Activated CD8-positive, alpha-beta T cell treated with anti-CD3 and anti-CD28 coated beads, Interleukin-2, amount 10 ng/mL, durations not matched to agents 7 days and 5 days (primary cell): ENCODE measurements at regions of chr11 and their contacts with region 1.

Region 1: DNA sequence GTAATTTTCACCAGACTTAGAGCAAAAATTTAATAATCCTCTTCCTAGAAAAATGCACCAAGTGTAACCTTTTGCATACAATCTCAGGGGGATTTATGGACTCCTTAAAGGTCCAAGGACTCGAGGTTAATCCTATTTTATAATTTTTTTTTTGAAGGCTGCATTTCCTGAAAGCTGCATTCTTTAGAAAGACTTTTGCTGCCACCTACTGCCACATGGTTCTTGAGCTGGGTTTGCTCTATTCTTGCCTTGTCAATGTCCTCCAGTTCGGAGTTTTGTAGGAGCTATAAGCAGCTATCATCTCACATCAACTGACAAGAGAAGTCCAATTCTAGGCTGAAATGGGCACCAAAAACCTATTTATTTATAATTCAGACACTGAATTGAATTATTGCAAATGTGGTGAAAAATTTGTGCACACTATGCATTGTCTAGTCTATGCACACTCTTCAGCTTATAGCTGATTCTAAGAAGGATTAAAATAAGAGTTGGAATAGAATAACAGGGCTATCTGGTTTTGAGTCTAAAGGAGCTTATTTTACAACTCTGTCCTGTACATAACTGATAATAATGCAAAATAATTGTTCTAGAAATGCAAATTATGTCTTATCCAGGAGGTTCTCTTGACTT is 31.3 kb downstream of the TRAF6 start:
- DNase-seq: peak; percentile 51
- ATAC-seq: peak; percentile 47
- H3K4me3 Mint-ChIP-seq: no peak overlapping the region
- H3K27ac Mint-ChIP-seq: no peak overlapping the region
- H3K4me1 Mint-ChIP-seq: peaks cover 6% of the 10 kb centered on the region
- H3K27me3 Mint-ChIP-seq: peaks cover 7% of the 10 kb centered on the region

Region 2: DNA sequence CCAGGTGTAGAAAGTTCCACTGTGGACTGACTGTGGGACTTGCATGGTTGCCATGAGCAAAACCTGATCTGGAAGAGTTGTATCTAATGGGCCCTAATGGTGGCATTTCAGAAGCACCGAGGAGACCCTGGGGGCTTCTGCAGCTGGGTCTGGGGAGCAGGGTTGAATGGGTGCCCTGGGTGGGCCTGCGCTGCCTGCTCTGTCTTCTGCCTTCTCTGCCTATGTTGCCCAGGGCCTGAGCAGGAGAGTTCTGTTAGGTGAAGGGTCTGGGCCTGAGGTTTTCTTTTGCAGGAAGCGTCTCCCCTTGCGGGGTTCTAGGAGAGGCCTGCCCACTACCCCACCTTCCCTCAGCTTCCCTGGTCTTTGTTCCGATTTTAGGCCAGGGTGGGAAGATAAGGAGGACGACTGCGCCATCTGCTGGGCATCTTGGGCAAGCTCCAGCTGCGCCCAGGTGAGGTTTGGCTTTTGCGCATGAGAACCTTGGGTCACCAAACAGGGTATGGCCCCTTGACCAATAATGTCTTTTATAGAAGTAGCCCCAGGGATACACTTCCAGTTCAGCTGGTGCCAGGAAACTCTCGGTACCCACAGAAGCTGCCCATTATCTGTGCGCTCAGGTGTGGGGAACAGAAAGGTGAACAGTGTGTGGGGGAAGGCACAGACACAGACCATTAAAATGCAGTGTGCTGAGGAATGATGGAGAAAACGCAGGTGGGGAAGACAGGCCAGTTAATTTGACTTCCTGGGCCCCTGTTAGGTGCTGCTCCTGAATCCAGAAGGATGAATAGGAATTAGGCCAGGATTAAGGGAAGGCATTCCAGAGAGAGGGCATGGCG is 212.8 kb before region 1 on chr11:
- CTCF ChIA-PET with region 1: interaction called, 11 read pairs
- POLR2A ChIA-PET with region 1: no interaction called
- DNase-seq: peak; percentile 63
- ATAC-seq: peak; percentile 74
- H3K4me3 Mint-ChIP-seq: no peak overlapping the region
- H3K27ac Mint-ChIP-seq: no peak overlapping the region
- H3K4me1 Mint-ChIP-seq: no peaks in the 10 kb centered on the region
- H3K27me3 Mint-ChIP-seq: no peaks in the 10 kb centered on the region

Region 3: DNA sequence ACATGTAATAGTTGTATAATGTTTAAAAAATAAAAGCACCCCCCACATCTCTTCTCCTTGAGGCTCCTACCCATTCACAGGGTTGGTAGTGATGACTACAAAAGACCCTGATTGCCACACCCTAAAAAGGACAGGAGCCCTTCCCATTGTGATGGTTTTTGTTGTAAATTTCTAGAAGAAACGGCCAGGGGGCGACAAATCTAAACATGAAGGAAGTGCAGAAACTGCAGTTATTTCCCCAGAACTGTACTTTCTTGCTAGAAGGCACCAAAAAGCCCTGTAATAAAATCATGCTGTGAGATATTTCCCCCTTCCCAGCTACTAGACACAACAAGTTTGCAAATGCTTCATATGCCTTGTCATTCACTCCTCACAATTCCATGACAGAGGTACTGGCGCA is 171.9 kb before region 1 on chr11:
- CTCF ChIA-PET with region 1: interaction called, 12 read pairs
- POLR2A ChIA-PET with region 1: no interaction called
- DNase-seq: peak; percentile 35
- ATAC-seq: no peak
- H3K4me3 Mint-ChIP-seq: no peak overlapping the region
- H3K27ac Mint-ChIP-seq: no peak overlapping the region
- H3K4me1 Mint-ChIP-seq: peaks cover 5% of the 10 kb centered on the region
- H3K27me3 Mint-ChIP-seq: peaks cover 22% of the 10 kb centered on the region

Region 4: GRCh38 chr11:36376888-36377758 is 101.7 kb before region 1 on chr11:
- CTCF ChIA-PET with region 1: interaction called, 13 read pairs
- POLR2A ChIA-PET with region 1: no interaction called
- DNase-seq: peak; percentile 61
- ATAC-seq: peak; percentile 72
- H3K4me3 Mint-ChIP-seq: peak overlapping the region; percentile 85
- H3K27ac Mint-ChIP-seq: peak overlapping the region; percentile 55
- H3K4me1 Mint-ChIP-seq: peaks cover 29% of the 10 kb centered on the region
- H3K27me3 Mint-ChIP-seq: peaks cover 66% of the 10 kb centered on the region

Region 5: DNA sequence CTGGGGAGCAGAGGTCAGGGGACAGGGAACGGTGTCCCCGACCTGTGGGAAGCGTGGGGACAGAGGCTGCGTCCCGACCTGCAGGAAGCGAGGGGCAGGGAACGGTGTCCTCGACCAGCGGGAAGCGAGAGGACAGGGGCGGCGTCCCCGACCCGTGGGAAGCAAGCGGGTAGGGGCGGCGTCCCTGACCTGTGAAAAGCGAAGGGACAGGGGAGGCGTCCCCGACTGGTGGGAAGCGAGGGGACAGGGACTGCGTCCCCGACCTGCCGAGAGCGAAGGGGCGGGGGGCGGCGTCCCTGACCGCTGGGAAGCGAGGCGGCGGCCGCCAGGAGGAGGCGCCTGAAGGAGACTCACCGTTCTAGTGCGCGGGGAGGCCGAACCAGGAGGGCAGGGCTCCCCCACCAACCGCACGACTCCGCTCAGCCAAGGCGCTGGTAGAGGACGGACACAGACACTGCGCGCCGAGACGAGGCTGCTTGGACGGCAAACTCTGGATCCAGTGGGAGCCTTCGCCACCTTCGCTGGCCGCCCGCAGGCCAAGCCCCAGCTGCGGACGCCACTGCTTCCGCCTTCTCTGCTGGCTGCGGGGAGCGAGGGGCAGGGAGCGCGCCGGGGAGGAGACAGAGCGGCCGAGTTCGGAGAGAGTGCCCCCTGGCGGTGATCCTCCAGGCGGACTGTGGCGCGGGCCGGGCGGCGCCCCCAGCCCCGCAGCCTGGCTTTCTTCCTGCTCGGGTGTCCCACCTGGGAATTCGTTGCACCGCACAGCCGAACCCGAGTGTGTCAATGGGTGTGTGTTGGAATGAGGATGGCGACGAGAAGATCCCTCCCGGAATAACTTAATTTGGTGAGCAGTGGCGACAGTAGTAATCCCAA is 31.1 kb after region 1 on chr11 and contains the start of gene TRAF6:
- CTCF ChIA-PET with region 1: interaction called, 10 read pairs
- POLR2A ChIA-PET with region 1: no interaction called
- DNase-seq: peak; percentile 91
- ATAC-seq: peak; percentile 97
- H3K4me3 Mint-ChIP-seq: peak within 1 kb of the TSS; percentile 98
- H3K27ac Mint-ChIP-seq: peak within 1 kb of the TSS; percentile 92
- H3K4me1 Mint-ChIP-seq: peaks cover 32% of the 10 kb centered on the region
- H3K27me3 Mint-ChIP-seq: peaks cover 9% of the 10 kb centered on the region
- total RNA-seq, gene TRAF6: 8.8 to 9.1 TPM

Region 6: GRCh38 chr11:36586543-36586942 is 107.7 kb after region 1 on chr11:
- CTCF ChIA-PET with region 1: no interaction called
- POLR2A ChIA-PET with region 1: no interaction called
- DNase-seq: no peak
- ATAC-seq: no peak
- H3K4me3 Mint-ChIP-seq: no peak overlapping the region
- H3K27ac Mint-ChIP-seq: no peak overlapping the region
- H3K4me1 Mint-ChIP-seq: no peaks in the 10 kb centered on the region
- H3K27me3 Mint-ChIP-seq: peaks cover 10% of the 10 kb centered on the region